ENCODE measurements at regions of chr2 and their contacts with region 1.

Region 1: GRCh38 chr2:11829947-11830707 is 83.7 kb downstream of the LPIN1 start:
- DNase-seq: peak; percentile 98
- H3K4me3 ChIP-seq: peak overlapping the region; percentile 26 to 39 (median 35)
- H3K27ac ChIP-seq: peak overlapping the region; percentile 83
- H3K4me1 ChIP-seq: peaks cover 37% of the 10 kb centered on the region
- H3K27me3 ChIP-seq: no peaks in the 10 kb centered on the region
- CTCF ChIP-seq: peak; percentile 32 to 71

Region 2: DNA sequence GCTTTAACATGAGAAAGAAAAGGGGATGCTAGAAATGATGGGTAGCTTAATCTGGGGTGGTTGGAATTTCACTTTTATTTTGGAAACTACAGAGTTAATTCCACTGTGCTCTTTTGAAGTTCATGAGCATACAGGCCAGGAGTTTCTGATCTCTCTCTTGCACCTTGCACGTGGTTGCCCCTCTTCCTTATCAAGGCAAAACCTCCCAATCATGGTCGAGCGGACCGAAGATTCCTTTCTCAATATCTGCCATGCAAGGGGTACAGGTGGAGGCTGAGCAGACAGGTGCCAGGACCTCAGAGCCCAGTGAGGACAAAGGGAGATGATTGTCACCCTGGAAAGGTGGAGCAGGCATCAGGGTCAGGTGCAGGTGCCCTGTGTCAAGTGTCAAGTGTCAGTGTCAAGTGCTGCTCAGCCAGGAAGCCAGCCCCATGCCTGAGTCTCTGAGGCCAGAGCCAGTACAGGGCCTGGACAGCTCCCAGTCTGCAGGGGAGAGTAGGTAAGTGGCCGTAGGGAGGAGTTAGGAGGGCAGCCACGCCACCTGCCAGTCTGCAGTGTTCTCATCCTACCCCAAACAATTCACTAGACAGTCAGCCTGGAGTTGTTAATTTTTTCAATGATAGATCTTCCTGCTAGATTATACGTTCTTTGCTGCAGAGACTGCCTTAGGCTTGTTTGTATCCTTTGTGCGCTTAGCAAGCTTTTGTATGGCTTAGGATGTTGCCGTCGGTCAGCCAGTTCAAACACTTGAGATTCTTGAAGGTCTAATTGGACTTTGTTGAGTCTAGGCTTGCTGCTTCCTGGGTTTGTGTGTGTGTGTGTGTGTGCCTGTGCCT is 41.4 kb before region 1 on chr2:
- CTCF ChIA-PET with region 1: no interaction called
- dilution Hi-C with region 1: no loop called
- in situ Hi-C with region 1: no loop called
- intact Hi-C with region 1: no loop called
- DNase-seq: no peak
- H3K4me3 ChIP-seq: no peak overlapping the region
- H3K27ac ChIP-seq: no peak overlapping the region
- H3K4me1 ChIP-seq: no peaks in the 10 kb centered on the region
- H3K27me3 ChIP-seq: no peaks in the 10 kb centered on the region
- CTCF ChIP-seq: no peak

Region 3: GRCh38 chr2:12176623-12177454 is 346.7 kb after region 1 on chr2:
- CTCF ChIA-PET with region 1: no interaction called
- dilution Hi-C with region 1: no loop called
- in situ Hi-C with region 1: no loop called
- intact Hi-C with region 1: loop called (anchors 1 kb)
- DNase-seq: peak; percentile 49
- H3K4me3 ChIP-seq: no peak overlapping the region
- H3K27ac ChIP-seq: no peak overlapping the region
- H3K4me1 ChIP-seq: peaks cover 20% of the 10 kb centered on the region
- H3K27me3 ChIP-seq: no peaks in the 10 kb centered on the region
- CTCF ChIP-seq: no peak

Region 4: DNA sequence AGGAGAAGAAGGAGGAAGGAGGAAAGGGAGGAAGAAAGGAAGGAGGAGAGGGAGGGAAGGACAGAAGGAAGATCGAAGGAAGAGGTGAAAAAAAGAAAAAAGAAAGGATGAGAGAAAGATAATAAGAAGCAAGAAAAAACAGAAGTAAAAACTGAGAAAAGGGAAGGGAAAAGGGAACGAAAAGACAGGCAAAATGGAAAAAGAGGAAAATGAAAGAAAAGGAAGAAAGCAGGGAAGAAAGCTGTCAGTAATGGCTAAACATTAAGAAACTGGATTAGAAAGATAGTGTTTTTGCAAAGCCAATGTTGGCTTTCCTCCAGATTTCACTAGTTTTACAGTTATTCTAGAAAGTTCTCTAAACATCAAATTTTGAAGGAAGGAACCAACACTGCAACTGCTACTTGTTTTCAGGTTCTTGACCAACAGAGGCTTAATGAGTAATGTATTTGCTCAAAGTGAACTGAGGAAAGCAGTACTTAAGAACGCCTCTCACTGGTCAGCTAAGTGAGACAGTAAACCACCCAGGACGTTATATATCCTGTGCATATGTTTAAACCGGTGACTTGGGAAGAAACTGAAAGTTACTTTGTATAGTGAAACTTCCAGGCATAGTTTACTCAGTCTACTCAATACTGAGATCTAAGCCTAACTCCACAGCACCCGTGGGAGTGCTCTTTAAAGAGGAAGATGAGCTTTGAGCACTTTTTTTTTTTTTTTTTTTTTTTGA is 600.4 kb after region 1 on chr2:
- CTCF ChIA-PET with region 1: no interaction called
- dilution Hi-C with region 1: no loop called
- in situ Hi-C with region 1: no loop called
- intact Hi-C with region 1: loop called (anchors 5 kb)
- DNase-seq: no peak
- H3K4me3 ChIP-seq: no peak overlapping the region
- H3K27ac ChIP-seq: no peak overlapping the region
- H3K4me1 ChIP-seq: no peaks in the 10 kb centered on the region
- H3K27me3 ChIP-seq: no peaks in the 10 kb centered on the region
- CTCF ChIP-seq: no peak

Region 5: DNA sequence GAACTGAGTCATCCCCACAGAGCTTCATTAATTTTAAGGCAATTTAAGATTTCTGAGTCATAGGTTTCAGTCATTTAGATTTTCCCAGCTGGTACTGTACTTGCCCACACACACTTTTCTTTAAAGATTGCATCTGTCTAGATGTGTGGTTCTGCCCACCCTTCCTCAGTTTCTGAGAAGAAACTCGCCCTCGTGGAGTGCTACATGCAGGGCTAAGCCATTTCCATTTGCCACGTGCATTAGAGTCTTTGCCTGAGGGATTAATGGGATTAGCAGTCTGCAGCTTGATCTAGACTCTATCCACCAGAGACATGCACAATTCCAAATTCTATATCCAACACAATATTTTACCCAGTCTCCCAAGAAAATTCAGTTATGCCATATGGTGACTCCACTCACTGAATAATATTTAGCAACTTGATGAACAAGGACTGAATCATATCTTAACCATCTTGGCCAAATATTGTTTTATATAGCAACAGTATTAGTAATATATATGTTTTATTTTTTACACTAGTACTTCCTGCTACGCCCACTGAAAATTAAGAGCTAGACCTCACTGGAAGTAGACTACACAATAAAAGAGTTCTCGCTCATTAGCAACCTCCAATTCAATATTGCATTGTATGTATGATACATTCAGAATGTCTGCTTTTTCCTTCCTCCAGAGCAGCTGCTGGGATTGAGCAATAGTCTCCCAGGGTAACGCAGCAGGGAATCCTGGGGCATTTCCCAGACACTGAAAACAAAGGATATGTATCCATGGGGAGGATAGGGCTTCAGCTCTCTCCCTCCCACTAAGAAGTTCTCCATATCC is 872.4 kb after region 1 on chr2:
- CTCF ChIA-PET with region 1: no interaction called
- dilution Hi-C with region 1: no loop called
- in situ Hi-C with region 1: no loop called
- intact Hi-C with region 1: loop called (anchors 5 kb)
- DNase-seq: peak; percentile 94
- H3K4me3 ChIP-seq: no peak overlapping the region
- H3K27ac ChIP-seq: peak overlapping the region; percentile 98
- H3K4me1 ChIP-seq: peaks cover 41% of the 10 kb centered on the region
- H3K27me3 ChIP-seq: no peaks in the 10 kb centered on the region
- CTCF ChIP-seq: no peak

Region 6: DNA sequence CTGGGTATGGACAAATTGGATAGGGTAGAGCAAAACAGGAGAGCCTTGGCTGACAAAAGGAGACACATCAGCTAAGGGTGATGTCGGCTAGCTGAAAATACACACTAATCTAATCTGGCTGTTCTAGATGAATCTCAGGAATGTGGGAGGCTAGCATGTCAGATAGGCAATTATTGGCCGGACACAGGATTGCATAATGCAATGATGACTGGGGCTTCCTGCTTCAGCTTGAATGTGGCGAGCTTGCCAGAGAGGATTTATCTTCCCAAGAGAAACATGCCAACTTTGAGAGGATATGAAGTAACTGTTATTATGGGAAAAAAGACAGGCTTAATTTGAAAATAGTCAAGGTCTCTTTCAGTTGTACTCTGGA is 989.0 kb after region 1 on chr2:
- CTCF ChIA-PET with region 1: no interaction called
- dilution Hi-C with region 1: no loop called
- in situ Hi-C with region 1: no loop called
- intact Hi-C with region 1: loop called (anchors 5 kb)
- DNase-seq: peak; percentile 85
- H3K4me3 ChIP-seq: no peak overlapping the region
- H3K27ac ChIP-seq: no peak overlapping the region
- H3K4me1 ChIP-seq: peaks cover 39% of the 10 kb centered on the region
- H3K27me3 ChIP-seq: no peaks in the 10 kb centered on the region
- CTCF ChIP-seq: no peak

Region 7: DNA sequence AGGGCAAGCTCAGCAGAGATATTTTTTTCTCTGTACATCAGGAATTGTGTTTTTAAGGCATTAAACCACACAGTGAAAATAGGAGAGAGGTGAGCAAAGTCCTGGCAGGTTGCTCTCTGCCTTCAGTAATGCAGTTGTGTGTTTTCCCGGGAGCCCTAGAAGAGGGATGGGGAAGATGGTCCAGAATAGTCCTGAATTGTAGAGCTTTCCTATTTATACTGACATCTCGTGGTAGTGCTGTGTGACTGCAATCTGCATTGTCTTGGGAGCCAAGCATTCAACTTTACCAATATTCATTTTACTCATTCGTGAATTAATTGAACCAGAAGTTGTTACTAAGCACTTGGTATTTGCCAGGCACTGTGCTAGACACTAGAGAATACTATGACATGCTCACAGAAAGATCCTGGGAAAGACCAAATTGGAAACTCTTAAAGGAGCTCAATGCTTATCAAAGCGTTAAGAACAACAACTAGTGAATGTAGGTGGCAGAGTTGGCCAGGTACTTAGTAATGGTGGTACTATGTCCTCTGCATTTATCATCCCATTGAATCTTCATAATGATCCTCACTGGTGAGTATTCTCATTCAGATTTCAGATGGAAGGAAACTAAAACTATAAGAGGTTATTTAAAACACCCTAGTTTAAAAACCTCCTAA is 1101.2 kb after region 1 on chr2:
- CTCF ChIA-PET with region 1: interaction called, 6 read pairs
- dilution Hi-C with region 1: no loop called
- in situ Hi-C with region 1: no loop called
- intact Hi-C with region 1: loop called (anchors 1 kb)
- DNase-seq: peak; percentile 35
- H3K4me3 ChIP-seq: no peak overlapping the region
- H3K27ac ChIP-seq: no peak overlapping the region
- H3K4me1 ChIP-seq: peaks cover 23% of the 10 kb centered on the region
- H3K27me3 ChIP-seq: no peaks in the 10 kb centered on the region
- CTCF ChIP-seq: peak; percentile 88 to 96

Region 8: DNA sequence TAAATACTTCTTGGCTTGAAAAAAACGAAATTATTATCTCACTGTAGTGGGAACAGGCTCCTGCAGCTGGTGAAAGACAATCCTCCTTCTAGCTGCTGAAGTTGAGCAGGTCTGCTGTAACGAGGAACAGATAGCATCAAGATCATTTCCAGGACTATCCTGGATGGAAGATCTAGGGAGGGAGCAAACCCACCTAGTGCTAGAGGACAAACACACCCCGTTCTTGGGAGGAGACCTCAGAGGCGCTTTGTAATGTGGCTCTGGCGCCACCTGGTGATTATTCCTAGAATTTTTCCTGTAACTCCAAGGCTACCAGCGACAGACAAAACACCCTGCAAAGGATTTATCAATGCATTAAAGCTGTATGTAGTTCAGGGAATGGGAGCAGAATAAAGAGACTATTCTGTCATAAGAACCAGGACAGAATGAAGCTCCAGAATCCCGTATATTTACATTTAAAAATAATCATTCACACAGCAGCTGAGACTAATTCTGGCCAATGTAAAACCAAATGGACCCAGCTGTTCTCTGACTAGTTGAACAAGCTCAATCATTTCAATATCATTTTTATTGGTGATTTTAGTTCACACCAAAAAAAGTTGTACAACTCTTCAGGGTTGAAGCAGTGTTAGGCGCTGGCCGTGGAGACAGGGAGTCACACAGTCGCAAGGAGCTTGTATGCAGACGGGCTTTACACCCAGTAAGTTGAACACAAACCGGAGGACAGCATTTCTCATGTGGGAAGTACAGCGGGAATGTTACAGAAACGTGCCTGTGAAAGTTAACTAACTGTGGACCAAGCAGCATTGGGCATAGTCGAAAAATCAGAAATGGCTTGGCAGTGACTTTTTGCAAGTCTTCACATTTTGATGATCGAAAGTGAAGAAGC is 1176.9 kb after region 1 on chr2:
- CTCF ChIA-PET with region 1: no interaction called
- dilution Hi-C with region 1: no loop called
- in situ Hi-C with region 1: loop called (anchors 10 kb)
- intact Hi-C with region 1: loop called (anchors 1 kb)
- DNase-seq: peak; percentile 40
- H3K4me3 ChIP-seq: peak overlapping the region; percentile 14 to 31 (median 28)
- H3K27ac ChIP-seq: no peak overlapping the region
- H3K4me1 ChIP-seq: peaks cover 30% of the 10 kb centered on the region
- H3K27me3 ChIP-seq: no peaks in the 10 kb centered on the region
- CTCF ChIP-seq: peak; percentile 63 to 81